ENCODE measurements at regions of chr15 and their contacts with region 1.

Region 1: DNA sequence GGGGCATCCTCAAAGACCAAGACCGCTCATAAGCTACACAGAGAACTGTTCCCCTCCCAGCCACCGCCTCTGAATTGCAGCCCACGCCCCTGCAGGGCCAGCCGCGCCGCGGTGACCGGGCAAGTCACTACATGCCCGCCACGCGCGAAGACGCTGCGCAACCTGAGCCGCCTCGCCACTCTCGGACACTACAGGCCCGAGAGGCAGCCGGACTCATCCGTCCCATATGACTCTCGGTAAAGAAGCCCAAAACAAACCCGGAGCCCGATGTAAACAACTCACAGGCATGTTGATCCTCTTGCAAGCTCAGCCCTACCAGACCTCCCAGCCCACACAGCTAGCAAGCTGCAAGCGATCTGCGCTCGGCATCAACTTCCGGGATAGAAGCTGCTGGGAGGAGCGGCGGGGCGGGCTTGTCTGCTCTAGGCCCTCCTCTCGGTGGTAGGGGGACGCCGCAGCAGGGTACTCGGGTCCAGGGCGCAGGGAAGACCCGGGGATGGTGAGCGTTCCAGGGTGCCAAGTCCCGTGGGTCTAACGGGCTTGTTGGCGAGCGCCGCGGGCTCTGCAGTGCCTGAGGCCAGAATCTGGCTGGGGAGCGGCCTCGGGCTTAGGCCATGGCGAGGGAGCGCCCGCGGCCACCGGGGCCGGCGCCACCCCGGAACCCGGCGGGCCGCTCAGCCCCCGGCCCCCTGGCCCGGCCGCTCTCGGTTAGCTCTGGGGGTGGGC is at the start of gene RPS27L:
- DNase-seq: peak; percentile 91 to 93
- H3K4me3 ChIP-seq: peak within 1 kb of the TSS; percentile 92
- H3K4me3 Mint-ChIP-seq: peak within 1 kb of the TSS; percentile 99
- H3K27ac Mint-ChIP-seq: peak within 1 kb of the TSS; percentile 98
- H3K4me1 ChIP-seq: 0 out of 2 replicates have a peak, but pooled peaks cover 8% of the 10 kb centered on the region
- H3K4me1 Mint-ChIP-seq: no peaks in the 10 kb centered on the region
- H3K27me3 ChIP-seq: no peaks in the 10 kb centered on the region
- H3K27me3 Mint-ChIP-seq: no peaks in the 10 kb centered on the region
- CTCF ChIP-seq: no peak
- total RNA-seq, gene RPS27L: 62.2 and 73.0 TPM in 2 replicates

Region 2: DNA sequence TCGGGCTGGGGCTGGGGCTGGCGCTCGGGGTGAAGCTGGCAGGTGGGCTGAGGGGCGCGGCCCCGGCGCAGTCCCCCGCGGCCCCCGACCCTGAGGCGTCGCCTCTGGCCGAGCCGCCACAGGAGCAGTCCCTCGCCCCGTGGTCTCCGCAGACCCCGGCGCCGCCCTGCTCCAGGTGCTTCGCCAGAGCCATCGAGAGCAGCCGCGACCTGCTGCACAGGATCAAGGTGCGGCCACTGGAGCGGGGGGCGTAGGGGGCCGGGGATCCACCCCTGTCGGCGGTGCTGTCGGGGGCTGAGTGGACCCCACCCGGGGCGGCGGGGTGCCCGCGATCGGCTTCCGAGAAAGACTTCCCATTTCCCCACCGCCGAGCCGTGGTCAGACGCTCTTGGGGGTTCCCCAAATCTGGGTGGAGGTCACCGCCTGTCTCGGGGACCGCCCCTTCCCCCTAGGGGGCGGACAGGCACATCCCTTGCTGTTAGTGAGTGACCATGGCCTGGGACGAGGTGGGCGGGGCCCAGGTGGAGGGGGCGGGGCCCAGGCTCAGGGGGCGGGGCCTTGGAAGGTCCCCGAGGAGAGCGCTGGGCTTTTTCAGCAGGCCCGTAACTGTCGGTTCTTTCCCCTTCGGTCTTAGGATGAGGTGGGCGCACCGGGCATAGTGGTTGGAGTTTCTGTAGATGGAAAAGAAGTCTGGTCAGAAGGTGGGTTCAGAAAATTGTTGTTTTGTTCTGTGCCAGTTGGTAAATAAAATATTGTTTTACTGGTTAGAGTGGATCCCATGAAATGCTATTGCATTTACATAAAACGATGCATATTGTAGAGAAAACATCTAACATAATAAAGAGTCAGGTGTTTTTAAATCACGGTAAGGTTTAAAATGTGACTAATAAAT is 35.0 kb before region 1 on chr15:
- CTCF ChIA-PET with region 1: no interaction called
- POLR2A ChIA-PET with region 1: no interaction called
- intact Hi-C with region 1: loop called (anchors 5 kb)
- DNase-seq: peak; percentile 66 to 75
- H3K4me3 ChIP-seq: peak overlapping the region; percentile 95
- H3K4me3 Mint-ChIP-seq: peak overlapping the region; percentile 79
- H3K27ac Mint-ChIP-seq: no peak overlapping the region
- H3K4me1 ChIP-seq: peaks cover 9% of the 10 kb centered on the region; the same call in 1 of the 2 replicates
- H3K4me1 Mint-ChIP-seq: no peaks in the 10 kb centered on the region
- H3K27me3 ChIP-seq: no peaks in the 10 kb centered on the region
- H3K27me3 Mint-ChIP-seq: no peaks in the 10 kb centered on the region
- CTCF ChIP-seq: peak; percentile 34 to 39

Region 3: GRCh38 chr15:63203451-63204090 is 46.3 kb after region 1 on chr15:
- CTCF ChIA-PET with region 1: no interaction called
- POLR2A ChIA-PET with region 1: no interaction called
- intact Hi-C with region 1: no loop called
- DNase-seq: no peak
- H3K4me3 ChIP-seq: no peak overlapping the region
- H3K4me3 Mint-ChIP-seq: no peak overlapping the region
- H3K27ac Mint-ChIP-seq: no peak overlapping the region
- H3K4me1 ChIP-seq: peaks cover 14% of the 10 kb centered on the region
- H3K4me1 Mint-ChIP-seq: no peaks in the 10 kb centered on the region
- H3K27me3 ChIP-seq: no peaks in the 10 kb centered on the region
- H3K27me3 Mint-ChIP-seq: no peaks in the 10 kb centered on the region
- CTCF ChIP-seq: no peak

Region 4: GRCh38 chr15:63277038-63277892 is 120.0 kb after region 1 on chr15 and contains the start of gene APH1B:
- CTCF ChIA-PET with region 1: no interaction called
- POLR2A ChIA-PET with region 1: interaction called, 4 read pairs
- intact Hi-C with region 1: loop called (anchors 2 kb)
- DNase-seq: peak; percentile 86 to 88
- H3K4me3 ChIP-seq: peak within 1 kb of the TSS; percentile 76
- H3K4me3 Mint-ChIP-seq: peak within 1 kb of the TSS; percentile 81
- H3K27ac Mint-ChIP-seq: peak within 1 kb of the TSS; percentile 42
- H3K4me1 ChIP-seq: no peaks in the 10 kb centered on the region
- H3K4me1 Mint-ChIP-seq: peaks cover 19% of the 10 kb centered on the region
- H3K27me3 ChIP-seq: no peaks in the 10 kb centered on the region
- H3K27me3 Mint-ChIP-seq: no peaks in the 10 kb centered on the region
- CTCF ChIP-seq: no peak
- total RNA-seq, gene APH1B: 17.3 and 20.3 TPM in 2 replicates

Measured in Caco-2 (cell line).